ENCODE measurements at regions of chr9 and their contacts with region 1.

Region 1: DNA sequence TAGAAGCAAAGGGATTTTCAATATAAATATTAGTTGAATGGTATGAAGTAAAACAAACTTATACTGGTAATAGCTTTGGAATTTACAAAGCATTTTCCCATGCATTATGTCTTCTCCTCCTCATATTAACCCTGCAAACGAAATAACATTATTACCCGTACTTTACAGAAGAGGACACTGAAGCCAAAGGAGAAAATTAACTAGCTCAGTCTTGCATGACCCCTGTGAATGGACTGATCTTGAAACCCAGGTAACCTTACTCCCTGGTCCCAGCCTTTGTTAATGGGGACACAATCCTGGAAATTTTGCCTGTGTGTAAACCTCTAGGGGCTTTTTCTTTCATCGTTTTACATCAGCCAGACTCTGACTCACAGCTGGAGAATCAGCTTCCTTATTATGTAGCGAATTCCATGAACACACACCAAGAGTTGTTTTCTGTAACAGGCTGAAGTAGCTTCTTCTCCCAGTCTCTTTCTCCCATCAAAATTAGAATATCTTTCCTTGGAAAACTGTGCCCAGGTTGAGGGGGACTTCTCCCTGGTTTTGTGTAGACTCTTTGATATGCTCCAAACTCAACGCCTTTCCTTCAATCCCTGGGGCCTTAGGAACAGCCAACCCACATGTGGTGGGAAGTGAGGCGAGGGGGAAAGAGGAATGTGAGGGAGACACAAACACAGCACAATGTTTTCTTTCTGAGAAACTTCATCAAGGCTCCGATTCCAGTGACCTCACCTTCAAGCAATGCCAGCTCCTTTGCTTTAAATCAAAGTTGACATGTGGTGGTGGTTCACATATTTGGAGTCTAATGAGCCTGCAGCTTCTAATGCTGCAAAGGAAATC is 480.9 kb upstream of the PAPPA start:
- DNase-seq: peak; percentile 84 to 96
- ATAC-seq: peak; percentile 89 to 95
- H3K4me3 ChIP-seq: no peak overlapping the region
- H3K27ac ChIP-seq: peak overlapping the region; percentile 91 to 98
- H3K4me1 ChIP-seq: peaks cover 56% of the 10 kb centered on the region
- CTCF ChIP-seq: peak; percentile 12; the same call in 1 of the 3 replicates
- EP300 ChIP-seq: peak; percentile 94 to 96
- POLR2A ChIP-seq: no peak
- RAD21 ChIP-seq: peak; percentile 58 to 66

Region 2: GRCh38 chr9:115615821-115616665 is 56.7 kb before region 1 on chr9:
- CTCF ChIA-PET with region 1: interaction called, 9 read pairs
- POLR2A ChIA-PET with region 1: interaction called, 11 read pairs
- DNase-seq: peak; percentile 79 to 82
- ATAC-seq: peak; percentile 98 to 99
- H3K4me3 ChIP-seq: no peak overlapping the region
- H3K27ac ChIP-seq: peak overlapping the region; percentile 84 to 90
- H3K4me1 ChIP-seq: peaks cover 32% of the 10 kb centered on the region
- CTCF ChIP-seq: no peak
- EP300 ChIP-seq: peak; percentile 81 to 89; a peak in 3 of 5 replicates
- POLR2A ChIP-seq: no peak
- RAD21 ChIP-seq: peak; percentile 34 to 35; a peak in 3 of 5 replicates

Region 3: GRCh38 chr9:115694014-115694413 is 21.3 kb after region 1 on chr9:
- CTCF ChIA-PET with region 1: interaction called, 4 read pairs
- POLR2A ChIA-PET with region 1: interaction called, 16 read pairs
- DNase-seq: peak; percentile 22 to 93
- ATAC-seq: peak; percentile 92
- H3K4me3 ChIP-seq: no peak overlapping the region
- H3K27ac ChIP-seq: peak overlapping the region; percentile 75 to 86
- H3K4me1 ChIP-seq: peaks cover 31% of the 10 kb centered on the region
- CTCF ChIP-seq: peak; percentile 78
- EP300 ChIP-seq: peak; percentile 81 to 87; a peak in 3 of 5 replicates
- POLR2A ChIP-seq: no peak
- RAD21 ChIP-seq: peak; percentile 91 to 97

Region 4: DNA sequence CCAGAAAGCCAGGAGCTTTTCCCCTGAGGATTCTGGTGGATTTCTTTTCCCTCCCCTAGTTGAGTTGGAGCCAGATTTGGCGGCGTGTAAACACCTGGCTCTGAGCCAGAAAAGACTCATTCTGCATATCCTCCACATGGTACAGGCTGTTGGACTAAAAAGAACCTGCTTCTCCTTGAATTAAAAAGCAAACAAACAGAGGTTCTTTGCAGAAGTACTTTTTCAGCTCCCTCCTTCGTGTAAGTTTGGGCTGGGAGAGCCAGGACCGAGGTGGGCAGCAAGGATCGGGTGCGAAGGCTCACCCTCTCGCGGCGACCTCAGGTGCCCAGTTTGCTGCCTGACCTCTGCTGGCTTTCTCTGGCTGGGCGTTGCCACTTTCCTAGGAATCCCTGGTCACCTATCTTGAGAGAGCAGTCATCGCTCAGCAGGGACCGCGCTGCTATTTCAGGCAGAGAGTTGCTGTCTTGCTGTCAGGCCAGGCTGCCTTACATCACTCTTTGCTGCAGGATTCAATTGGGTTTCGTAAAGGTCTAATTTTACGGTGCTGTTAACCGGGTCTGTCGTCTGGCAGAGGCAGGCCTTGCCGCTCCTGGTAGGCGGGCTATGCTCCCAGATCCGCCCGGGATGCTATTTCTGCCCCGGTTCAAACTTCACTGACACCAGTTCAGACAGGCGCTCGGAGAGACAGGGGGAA is 484.1 kb after region 1 on chr9:
- CTCF ChIA-PET with region 1: interaction called, 7 read pairs
- POLR2A ChIA-PET with region 1: interaction called, 110 read pairs
- DNase-seq: peak; percentile 72 to 85
- ATAC-seq: peak; percentile 31 to 45; a peak in 5 of 6 replicates
- H3K4me3 ChIP-seq: peak overlapping the region; percentile 87
- H3K27ac ChIP-seq: peak overlapping the region; percentile 99 to 100
- H3K4me1 ChIP-seq: peaks cover 57% of the 10 kb centered on the region
- CTCF ChIP-seq: no peak
- EP300 ChIP-seq: peak in 1 of 2 experiments; percentile 28; a peak in 1 of 5 replicates
- POLR2A ChIP-seq: no peak
- RAD21 ChIP-seq: peak; percentile 8 to 34; a peak in 2 of 5 replicates

Region 5: GRCh38 chr9:116163293-116164055 is 490.8 kb after region 1 on chr9:
- CTCF ChIA-PET with region 1: interaction called, 3 read pairs
- POLR2A ChIA-PET with region 1: interaction called, 15 read pairs
- DNase-seq: no peak
- ATAC-seq: no peak
- H3K4me3 ChIP-seq: no peak overlapping the region
- H3K27ac ChIP-seq: peak overlapping the region; percentile 80 to 99; a peak in 5 of 6 replicates
- H3K4me1 ChIP-seq: peaks cover 100% of the 10 kb centered on the region
- CTCF ChIP-seq: peak; percentile 38; the same call in 2 of the 3 replicates
- EP300 ChIP-seq: no peak
- POLR2A ChIP-seq: no peak
- RAD21 ChIP-seq: peak; percentile 15 to 19; a peak in 1 of 5 replicates

Measured in A549 (cell line).